A673 (cell line): ENCODE measurements at regions of chr2 and their contacts with region 1.

Region 1: DNA sequence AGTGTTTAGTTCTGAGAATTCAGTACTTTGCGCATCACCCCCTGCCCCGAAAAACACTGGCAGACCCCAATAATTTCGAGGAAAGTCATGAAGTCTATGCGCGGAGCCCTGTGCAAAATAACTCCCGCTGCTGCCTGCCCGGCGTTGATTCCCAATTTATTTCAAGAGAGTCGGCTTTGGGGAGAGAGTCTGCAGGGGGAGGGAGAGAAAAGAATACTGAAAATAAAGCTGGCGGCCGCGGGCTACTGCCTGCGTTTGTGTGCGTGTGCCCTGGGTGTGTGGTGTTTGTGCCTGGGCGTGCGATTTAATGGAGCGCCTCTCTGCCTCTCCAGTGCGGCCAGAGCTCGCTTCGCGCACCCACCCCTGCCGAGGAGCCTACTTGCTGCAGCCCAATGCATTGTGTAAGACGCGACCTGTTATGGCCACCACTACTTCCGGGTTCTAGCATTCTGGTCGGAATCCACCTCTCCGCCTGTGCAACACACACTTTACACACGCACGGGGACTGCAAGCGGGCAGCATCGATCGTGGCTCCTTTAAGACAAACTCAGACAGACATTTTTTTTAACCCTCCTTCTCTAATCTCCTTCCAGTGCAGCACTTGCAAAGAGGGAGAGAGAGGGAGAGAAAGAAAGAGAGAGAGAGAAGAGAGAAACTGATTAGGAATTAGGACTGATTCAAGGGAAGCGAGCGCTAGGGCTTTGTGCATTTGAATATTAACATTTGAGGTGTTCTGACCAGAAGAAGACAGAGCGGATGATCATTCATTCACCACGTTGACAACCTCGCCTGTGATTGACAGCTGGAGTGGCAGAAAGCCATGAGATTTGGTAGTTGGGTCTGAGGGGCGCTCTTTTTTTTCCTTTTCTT is at the start of gene MEIS1:
- DNase-seq: peak; percentile 98
- H3K4me3 ChIP-seq: peak within 1 kb of the TSS; percentile 59
- H3K27ac ChIP-seq: peak within 1 kb of the TSS; percentile 95
- H3K4me1 ChIP-seq: peaks cover 19% of the 10 kb centered on the region
- H3K27me3 ChIP-seq: no peaks in the 10 kb centered on the region
- CTCF ChIP-seq: no peak
- total RNA-seq, gene MEIS1: 89.4 and 103 TPM in 2 replicates

Region 2: GRCh38 chr2:65799141-65799854 is 635.6 kb before region 1 on chr2:
- CTCF ChIA-PET with region 1: no interaction called
- POLR2A ChIA-PET with region 1: interaction called, 3 read pairs
- intact Hi-C with region 1: loop called (anchors 5 kb)
- DNase-seq: no peak
- H3K4me3 ChIP-seq: no peak overlapping the region
- H3K27ac ChIP-seq: peak overlapping the region; percentile 12
- H3K4me1 ChIP-seq: peaks cover 43% of the 10 kb centered on the region
- H3K27me3 ChIP-seq: no peaks in the 10 kb centered on the region
- CTCF ChIP-seq: no peak

Region 3: GRCh38 chr2:66418381-66418780 is 16.5 kb before region 1 on chr2:
- CTCF ChIA-PET with region 1: interaction called, 11 read pairs
- POLR2A ChIA-PET with region 1: interaction called, 4 read pairs
- intact Hi-C with region 1: no loop called
- DNase-seq: no peak
- H3K4me3 ChIP-seq: no peak overlapping the region
- H3K27ac ChIP-seq: no peak overlapping the region
- H3K4me1 ChIP-seq: peaks cover 40% of the 10 kb centered on the region
- H3K27me3 ChIP-seq: no peaks in the 10 kb centered on the region
- CTCF ChIP-seq: no peak

Region 4: DNA sequence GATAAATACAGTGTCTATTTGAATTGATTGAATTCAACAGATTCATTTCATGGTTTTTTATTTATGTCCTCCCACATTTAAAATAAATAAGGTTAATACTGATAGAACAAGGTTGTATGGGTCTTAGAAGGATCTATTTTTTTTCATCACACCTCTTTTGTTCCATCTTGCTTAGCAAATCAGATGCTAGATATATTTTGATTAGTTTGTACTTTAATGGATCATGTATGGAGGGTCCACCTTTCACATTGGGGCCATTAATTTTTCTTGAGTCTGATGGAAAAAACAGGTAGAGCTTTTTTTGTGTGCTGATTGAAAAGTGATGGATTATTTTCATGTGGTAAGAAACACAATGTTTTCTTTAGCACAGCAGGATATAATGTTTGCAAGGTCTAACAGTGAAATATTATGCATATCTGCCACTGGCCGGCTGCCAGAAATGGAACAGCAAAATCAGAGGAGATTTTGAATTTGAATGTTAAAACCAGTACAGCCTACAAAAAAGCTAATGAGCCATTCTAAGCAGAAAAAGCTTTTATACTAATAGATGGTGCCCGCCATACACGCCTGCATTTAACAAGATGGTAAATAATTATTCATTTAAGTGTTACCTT is 774.1 kb after region 1 on chr2:
- CTCF ChIA-PET with region 1: no interaction called
- POLR2A ChIA-PET with region 1: interaction called, 10 read pairs
- intact Hi-C with region 1: no loop called
- DNase-seq: peak; percentile 41
- H3K4me3 ChIP-seq: no peak overlapping the region
- H3K27ac ChIP-seq: no peak overlapping the region
- H3K4me1 ChIP-seq: peaks cover 34% of the 10 kb centered on the region
- H3K27me3 ChIP-seq: no peaks in the 10 kb centered on the region
- CTCF ChIP-seq: no peak

Region 5: GRCh38 chr2:67476809-67477790 is 1042.2 kb after region 1 on chr2:
- CTCF ChIA-PET with region 1: no interaction called
- POLR2A ChIA-PET with region 1: no interaction called
- intact Hi-C with region 1: loop called (anchors 2 kb)
- DNase-seq: peak; percentile 66
- H3K4me3 ChIP-seq: no peak overlapping the region
- H3K27ac ChIP-seq: no peak overlapping the region
- H3K4me1 ChIP-seq: peaks cover 8% of the 10 kb centered on the region
- H3K27me3 ChIP-seq: no peaks in the 10 kb centered on the region
- CTCF ChIP-seq: peak; percentile 67

Region 6: GRCh38 chr2:67846370-67847070 is 1411.6 kb after region 1 on chr2:
- CTCF ChIA-PET with region 1: no interaction called
- POLR2A ChIA-PET with region 1: no interaction called
- intact Hi-C with region 1: loop called (anchors 5 kb)
- DNase-seq: peak; percentile 90
- H3K4me3 ChIP-seq: peak overlapping the region; percentile 24
- H3K27ac ChIP-seq: no peak overlapping the region
- H3K4me1 ChIP-seq: peaks cover 14% of the 10 kb centered on the region
- H3K27me3 ChIP-seq: no peaks in the 10 kb centered on the region
- CTCF ChIP-seq: peak; percentile 84

Region 7: GRCh38 chr2:67997903-67998302 is 1563.0 kb after region 1 on chr2:
- CTCF ChIA-PET with region 1: no interaction called
- POLR2A ChIA-PET with region 1: no interaction called
- intact Hi-C with region 1: no loop called
- DNase-seq: no peak
- H3K4me3 ChIP-seq: no peak overlapping the region
- H3K27ac ChIP-seq: no peak overlapping the region
- H3K4me1 ChIP-seq: no peaks in the 10 kb centered on the region
- H3K27me3 ChIP-seq: no peaks in the 10 kb centered on the region
- CTCF ChIP-seq: no peak